Activated CD8-positive, alpha-beta memory T cell treated with anti-CD3 and anti-CD28 coated beads, Interleukin-2, amount 10 ng/mL, durations not matched to agents 7 days and 5 days (primary cell): ENCODE measurements at regions of chr6 and their contacts with region 1.

Region 1: GRCh38 chr6:89080542-89081422 is at the start of gene PNRC1:
- DNase-seq: peak; percentile 100
- ATAC-seq: peak; percentile 74
- H3K4me3 Mint-ChIP-seq: peak within 1 kb of the TSS; percentile 97
- H3K27ac Mint-ChIP-seq: peak within 1 kb of the TSS; percentile 99
- H3K4me1 Mint-ChIP-seq: peaks cover 26% of the 10 kb centered on the region
- H3K27me3 Mint-ChIP-seq: no peaks in the 10 kb centered on the region
- total RNA-seq, gene PNRC1: 66.9 to 71.8 TPM

Region 2: DNA sequence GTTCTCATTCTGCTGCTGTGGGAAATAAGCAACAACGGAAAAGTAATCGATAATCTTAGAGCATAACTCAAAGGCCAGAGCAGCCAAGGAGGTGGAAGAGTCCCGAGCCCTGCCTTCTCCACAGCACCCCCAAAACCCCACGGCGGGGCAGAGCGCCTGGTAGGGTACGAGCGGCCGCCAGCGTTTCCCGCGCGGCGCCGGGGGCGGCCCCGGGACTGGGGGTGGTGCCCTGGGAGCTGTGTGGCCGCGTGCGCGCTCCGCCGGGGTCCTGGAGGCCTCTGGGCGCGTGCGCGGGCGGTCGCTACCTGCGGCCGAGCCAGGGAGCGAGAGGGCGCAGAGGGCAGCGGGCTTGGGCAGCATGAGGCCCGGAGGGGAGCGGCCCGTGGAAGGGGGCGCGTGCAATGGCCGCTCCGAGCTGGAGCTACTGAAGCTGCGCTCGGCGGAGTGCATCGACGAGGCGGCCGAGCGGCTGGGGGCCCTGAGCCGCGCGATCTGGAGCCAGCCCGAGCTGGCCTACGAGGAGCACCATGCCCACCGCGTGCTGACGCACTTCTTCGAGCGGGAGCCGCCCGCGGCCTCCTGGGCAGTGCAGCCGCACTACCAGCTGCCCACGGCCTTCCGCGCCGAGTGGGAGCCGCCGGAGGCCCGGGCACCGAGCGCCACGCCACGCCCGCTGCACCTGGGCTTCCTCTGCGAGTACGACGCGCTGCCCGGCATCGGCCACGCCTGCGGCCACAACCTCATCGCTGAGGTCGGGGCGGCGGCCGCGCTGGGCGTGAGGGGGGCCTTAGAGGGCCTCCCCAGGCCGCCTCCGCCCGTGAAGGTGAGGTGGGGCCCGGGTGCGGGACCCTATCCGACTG is 65.2 kb after region 1 on chr6 and contains the start of gene PM20D2:
- CTCF ChIA-PET with region 1: interaction called, 20 read pairs
- DNase-seq: peak; percentile 78
- ATAC-seq: peak; percentile 85
- H3K4me3 Mint-ChIP-seq: peak within 1 kb of the TSS; percentile 84
- H3K27ac Mint-ChIP-seq: peak within 1 kb of the TSS; percentile 97
- H3K4me1 Mint-ChIP-seq: peaks cover 37% of the 10 kb centered on the region
- H3K27me3 Mint-ChIP-seq: peaks cover 10% of the 10 kb centered on the region
- total RNA-seq, gene PM20D2: 13.1 to 16.6 TPM

Region 3: GRCh38 chr6:89160331-89161092 is 79.7 kb after region 1 on chr6:
- CTCF ChIA-PET with region 1: no interaction called
- DNase-seq: no peak
- ATAC-seq: no peak
- H3K4me3 Mint-ChIP-seq: no peak overlapping the region
- H3K27ac Mint-ChIP-seq: no peak overlapping the region
- H3K4me1 Mint-ChIP-seq: no peaks in the 10 kb centered on the region
- H3K27me3 Mint-ChIP-seq: no peaks in the 10 kb centered on the region